ENCODE measurements at regions of chr2 and their contacts with region 1.

Region 1: DNA sequence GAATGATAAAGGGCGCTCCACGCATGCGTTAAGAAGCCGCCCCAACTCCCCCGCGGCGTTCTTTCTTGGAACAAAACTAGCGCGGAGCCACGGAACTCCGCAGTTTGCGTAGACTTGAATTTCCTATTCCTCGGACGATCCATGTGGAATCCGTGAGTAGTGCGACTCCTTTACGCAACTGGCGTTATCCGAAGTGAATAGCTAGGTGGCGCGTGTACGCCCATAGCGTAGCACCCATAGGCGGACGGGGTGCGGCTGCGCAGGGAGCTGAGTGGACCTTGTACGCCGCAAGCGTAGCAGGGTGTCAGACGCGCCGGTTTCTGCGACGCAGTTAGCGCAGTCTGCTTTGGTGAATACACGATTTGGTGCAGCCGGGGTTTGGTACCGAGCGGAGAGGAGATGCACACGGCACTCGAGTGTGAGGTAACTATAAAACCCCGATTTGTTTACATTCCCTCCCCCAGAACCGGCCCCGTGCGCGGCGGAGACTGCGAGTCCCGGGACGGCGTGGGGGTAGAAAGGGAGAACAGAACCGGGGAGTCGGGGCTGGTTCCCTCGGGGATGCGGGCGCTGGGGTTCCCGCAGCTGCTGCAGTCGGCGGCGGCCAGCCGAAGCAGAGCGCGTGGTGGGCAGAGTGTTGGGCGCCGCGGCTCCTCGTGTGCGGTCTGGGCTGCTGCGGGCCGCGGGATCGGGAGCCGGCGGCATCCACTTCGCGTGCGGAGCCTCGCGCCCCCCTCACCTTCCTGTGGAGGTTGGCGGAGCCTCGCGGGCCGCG is at the start of gene SLC39A10:
- DNase-seq: peak; percentile 91 to 93
- H3K4me3 ChIP-seq: peak within 1 kb of the TSS; percentile 68
- H3K27ac ChIP-seq: peak within 1 kb of the TSS; percentile 3; the same call in 1 of the 2 replicates
- H3K4me1 ChIP-seq: peaks cover 13% of the 10 kb centered on the region
- H3K27me3 ChIP-seq: no peaks in the 10 kb centered on the region
- CTCF ChIP-seq: no peak; the same call in 1 of the 2 replicates
- total RNA-seq, gene SLC39A10: 27.7 and 43.7 TPM in 2 replicates

Region 2: DNA sequence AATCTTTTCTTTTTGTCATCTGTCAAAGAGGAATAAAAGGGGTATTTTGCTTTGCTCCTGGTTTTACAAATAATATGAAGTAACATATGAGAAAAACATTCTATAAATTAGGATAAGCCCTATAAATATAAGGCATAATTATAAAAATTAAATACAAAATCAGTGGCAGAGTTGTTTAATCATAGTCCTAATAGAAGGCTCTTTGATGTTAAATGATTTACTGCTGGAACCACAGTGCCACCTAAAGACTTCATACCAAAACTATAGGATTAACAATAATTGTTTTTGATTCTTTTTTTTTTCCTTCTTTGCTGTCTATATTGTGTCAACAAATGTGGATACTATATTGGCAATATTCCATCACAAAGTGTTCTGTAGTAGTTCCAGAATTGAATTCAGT is 837.7 kb before region 1 on chr2:
- CTCF ChIA-PET with region 1: interaction called, 10 read pairs
- POLR2A ChIA-PET with region 1: no interaction called
- intact Hi-C with region 1: no loop called
- DNase-seq: no peak
- H3K4me3 ChIP-seq: no peak overlapping the region
- H3K27ac ChIP-seq: no peak overlapping the region
- H3K4me1 ChIP-seq: no peaks in the 10 kb centered on the region
- H3K27me3 ChIP-seq: no peaks in the 10 kb centered on the region
- CTCF ChIP-seq: peak; percentile 23; the same call in 1 of the 2 replicates

Region 3: DNA sequence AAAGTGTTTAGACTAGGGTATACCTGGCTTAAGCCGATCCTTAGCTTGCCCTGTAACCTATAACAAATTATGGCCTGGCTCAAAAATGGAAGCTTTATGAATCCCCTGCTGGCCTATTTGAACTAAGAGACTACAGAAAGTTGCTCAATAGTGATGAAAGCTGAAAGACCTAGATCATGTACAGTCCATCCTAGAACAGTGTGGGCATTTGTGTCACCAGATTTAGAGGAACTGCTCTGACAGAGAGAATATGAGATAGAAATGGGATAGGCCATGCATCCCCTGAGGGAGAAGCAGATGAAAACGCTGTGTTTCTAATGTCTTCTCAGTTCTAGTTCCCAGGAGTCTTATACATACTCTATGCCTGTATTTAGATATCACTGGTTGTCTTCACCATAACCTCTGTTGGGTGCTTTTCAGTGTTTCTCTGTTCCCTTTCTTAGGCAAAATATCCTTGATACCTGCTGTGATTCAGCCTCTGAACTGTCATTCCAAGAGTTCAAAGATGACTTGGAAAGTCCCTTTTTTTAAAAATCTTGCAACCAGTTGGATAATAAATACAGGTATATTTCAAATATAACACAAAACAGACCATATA is 246.9 kb before region 1 on chr2:
- CTCF ChIA-PET with region 1: no interaction called
- POLR2A ChIA-PET with region 1: no interaction called
- intact Hi-C with region 1: loop called (anchors 10 kb)
- DNase-seq: no peak
- H3K4me3 ChIP-seq: no peak overlapping the region
- H3K27ac ChIP-seq: no peak overlapping the region
- H3K4me1 ChIP-seq: no peaks in the 10 kb centered on the region
- H3K27me3 ChIP-seq: no peaks in the 10 kb centered on the region
- CTCF ChIP-seq: no peak

Region 4: GRCh38 chr2:195520671-195521155 is 136.3 kb before region 1 on chr2:
- CTCF ChIA-PET with region 1: no interaction called
- POLR2A ChIA-PET with region 1: no interaction called
- intact Hi-C with region 1: loop called (anchors 1 kb)
- DNase-seq: peak; percentile 57 to 69
- H3K4me3 ChIP-seq: no peak overlapping the region
- H3K27ac ChIP-seq: no peak overlapping the region
- H3K4me1 ChIP-seq: no peaks in the 10 kb centered on the region
- H3K27me3 ChIP-seq: no peaks in the 10 kb centered on the region
- CTCF ChIP-seq: no peak

Region 5: GRCh38 chr2:195561203-195562032 is 95.6 kb before region 1 on chr2:
- CTCF ChIA-PET with region 1: interaction called, 7 read pairs
- POLR2A ChIA-PET with region 1: interaction called, 7 read pairs
- intact Hi-C with region 1: loop called (anchors 1 kb)
- DNase-seq: peak; percentile 7 to 85
- H3K4me3 ChIP-seq: no peak overlapping the region
- H3K27ac ChIP-seq: peak overlapping the region; percentile 32; the same call in 1 of the 2 replicates
- H3K4me1 ChIP-seq: peaks cover 10% of the 10 kb centered on the region; the same call in 1 of the 2 replicates
- H3K27me3 ChIP-seq: no peaks in the 10 kb centered on the region
- CTCF ChIP-seq: no peak

Region 6: GRCh38 chr2:195612611-195613495 is 44.2 kb before region 1 on chr2:
- CTCF ChIA-PET with region 1: interaction called, 12 read pairs
- POLR2A ChIA-PET with region 1: interaction called, 3 read pairs
- intact Hi-C with region 1: loop called (anchors 1 kb)
- DNase-seq: peak; percentile 57 to 80
- H3K4me3 ChIP-seq: peak overlapping the region; percentile 45
- H3K27ac ChIP-seq: peak overlapping the region; percentile 57
- H3K4me1 ChIP-seq: peaks cover 24% of the 10 kb centered on the region
- H3K27me3 ChIP-seq: no peaks in the 10 kb centered on the region
- CTCF ChIP-seq: no peak

Region 7: GRCh38 chr2:195830968-195831950 is 174.2 kb after region 1 on chr2:
- CTCF ChIA-PET with region 1: no interaction called
- POLR2A ChIA-PET with region 1: no interaction called
- intact Hi-C with region 1: no loop called
- DNase-seq: no peak
- H3K4me3 ChIP-seq: no peak overlapping the region
- H3K27ac ChIP-seq: no peak overlapping the region
- H3K4me1 ChIP-seq: no peaks in the 10 kb centered on the region
- H3K27me3 ChIP-seq: no peaks in the 10 kb centered on the region
- CTCF ChIP-seq: no peak

Region 8: GRCh38 chr2:196068271-196069209 is 411.5 kb after region 1 on chr2 and contains the start of gene DNAH7:
- CTCF ChIA-PET with region 1: no interaction called
- POLR2A ChIA-PET with region 1: no interaction called
- intact Hi-C with region 1: loop called (anchors 10 kb)
- DNase-seq: peak; percentile 58 to 78
- H3K4me3 ChIP-seq: peak within 1 kb of the TSS; percentile 65
- H3K27ac ChIP-seq: no peak within 1 kb of the TSS
- H3K4me1 ChIP-seq: no peaks in the 10 kb centered on the region; the same call in 1 of the 2 replicates
- H3K27me3 ChIP-seq: no peaks in the 10 kb centered on the region
- CTCF ChIP-seq: peak; percentile 57
- total RNA-seq, gene DNAH7: 2.2 and 3.8 TPM in 2 replicates